ENCODE measurements at regions of chr6 and their contacts with region 1.

Region 1: DNA sequence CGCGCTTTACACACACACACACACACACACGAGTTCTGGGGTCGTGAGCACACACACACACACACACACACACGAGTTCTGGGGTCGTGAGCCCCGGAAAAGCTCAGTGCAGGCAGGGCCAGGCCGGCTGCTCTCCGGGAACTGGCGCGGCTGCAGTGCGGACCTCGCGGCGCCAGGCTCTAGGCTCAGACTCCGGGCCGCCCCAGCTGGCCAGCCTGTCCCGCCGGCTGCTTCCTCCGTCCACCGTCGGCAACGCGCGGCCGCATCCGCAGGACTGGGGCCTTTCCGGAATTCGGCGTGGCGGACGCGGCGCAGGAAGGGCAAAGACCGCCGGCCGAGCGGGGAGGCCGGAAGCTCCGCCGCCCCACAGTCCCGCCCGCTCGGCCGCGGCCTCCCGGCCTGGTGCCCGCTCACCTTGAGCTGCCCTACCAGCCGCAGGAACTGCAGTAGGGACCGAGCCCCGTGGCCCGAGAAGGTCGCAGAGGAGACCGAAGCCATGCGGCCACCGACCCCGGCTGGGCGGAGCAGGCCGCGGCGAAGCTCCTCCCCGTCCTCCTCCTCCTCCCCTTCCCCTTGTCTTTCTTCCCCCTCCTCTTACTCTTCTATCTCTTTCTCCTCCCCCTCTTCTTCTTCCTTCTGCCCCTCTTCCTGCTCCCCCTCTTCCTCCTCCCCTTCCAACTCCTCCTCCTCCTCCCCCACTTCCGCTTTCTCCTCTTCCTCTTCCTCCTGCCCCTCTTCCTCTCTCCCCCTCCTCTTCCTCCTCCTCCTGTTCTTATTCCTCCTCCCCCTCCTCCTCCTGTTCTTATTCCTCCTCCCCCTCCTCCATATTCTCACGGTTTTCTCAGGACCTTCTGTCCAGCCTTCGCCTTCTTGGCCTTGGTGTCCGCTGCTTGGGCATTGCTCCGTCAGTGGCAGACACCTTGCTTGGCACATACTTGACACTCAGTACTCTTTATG is at the start of gene HDDC2:
- DNase-seq: peak; percentile 50
- H3K4me3 Mint-ChIP-seq: peak within 1 kb of the TSS; percentile 97
- H3K27ac Mint-ChIP-seq: peak within 1 kb of the TSS; percentile 92
- H3K4me1 Mint-ChIP-seq: peaks cover 52% of the 10 kb centered on the region
- H3K27me3 Mint-ChIP-seq: peaks cover 13% of the 10 kb centered on the region
- total RNA-seq, gene HDDC2: 79.7 and 82.4 TPM in 2 replicates

Region 2: DNA sequence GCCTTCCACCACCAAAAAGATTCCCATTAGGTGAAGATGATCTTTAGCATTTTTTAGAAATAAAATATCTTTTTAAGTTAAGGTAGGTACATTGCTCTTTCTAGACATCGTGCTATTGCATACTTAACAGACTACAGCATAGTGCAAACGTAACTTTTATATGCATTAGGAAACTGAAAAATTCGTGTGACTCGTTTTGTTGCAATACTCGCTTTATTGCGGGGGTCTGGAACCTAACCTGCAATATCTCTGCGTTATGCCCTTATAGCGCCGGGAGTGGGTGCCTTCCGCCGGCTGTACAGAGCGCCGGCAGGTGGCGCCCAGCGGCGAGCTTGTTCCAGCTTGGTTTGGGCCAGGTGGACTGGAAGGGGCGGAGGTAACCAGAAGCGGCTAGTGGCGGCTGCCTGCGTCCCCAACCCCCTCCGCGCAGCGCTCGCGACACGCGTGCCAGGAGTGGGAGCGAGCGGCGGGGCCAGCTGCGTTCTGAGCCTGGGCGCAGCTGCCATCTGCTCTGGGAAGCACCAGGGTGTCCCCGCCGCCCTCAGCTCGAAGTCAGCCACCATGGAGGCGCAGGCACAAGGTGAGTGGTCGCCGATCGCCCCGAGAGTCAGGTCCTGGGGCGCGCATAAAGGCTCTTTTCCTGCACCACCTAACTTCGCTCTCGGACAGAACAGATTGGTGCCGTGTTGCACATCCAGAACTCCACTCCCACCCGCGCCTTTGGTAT is 148.2 kb before region 1 on chr6 and contains the start of gene TPD52L1:
- intact Hi-C with region 1: loop called (anchors 5 kb)
- DNase-seq: peak; percentile 31
- H3K4me3 Mint-ChIP-seq: peak within 1 kb of the TSS; percentile 74
- H3K27ac Mint-ChIP-seq: no peak within 1 kb of the TSS
- H3K4me1 Mint-ChIP-seq: no peaks in the 10 kb centered on the region
- H3K27me3 Mint-ChIP-seq: peaks cover 43% of the 10 kb centered on the region
- total RNA-seq, gene TPD52L1: 0.29 TPM in 1 of 2 replicates, not detected in the other

Region 3: DNA sequence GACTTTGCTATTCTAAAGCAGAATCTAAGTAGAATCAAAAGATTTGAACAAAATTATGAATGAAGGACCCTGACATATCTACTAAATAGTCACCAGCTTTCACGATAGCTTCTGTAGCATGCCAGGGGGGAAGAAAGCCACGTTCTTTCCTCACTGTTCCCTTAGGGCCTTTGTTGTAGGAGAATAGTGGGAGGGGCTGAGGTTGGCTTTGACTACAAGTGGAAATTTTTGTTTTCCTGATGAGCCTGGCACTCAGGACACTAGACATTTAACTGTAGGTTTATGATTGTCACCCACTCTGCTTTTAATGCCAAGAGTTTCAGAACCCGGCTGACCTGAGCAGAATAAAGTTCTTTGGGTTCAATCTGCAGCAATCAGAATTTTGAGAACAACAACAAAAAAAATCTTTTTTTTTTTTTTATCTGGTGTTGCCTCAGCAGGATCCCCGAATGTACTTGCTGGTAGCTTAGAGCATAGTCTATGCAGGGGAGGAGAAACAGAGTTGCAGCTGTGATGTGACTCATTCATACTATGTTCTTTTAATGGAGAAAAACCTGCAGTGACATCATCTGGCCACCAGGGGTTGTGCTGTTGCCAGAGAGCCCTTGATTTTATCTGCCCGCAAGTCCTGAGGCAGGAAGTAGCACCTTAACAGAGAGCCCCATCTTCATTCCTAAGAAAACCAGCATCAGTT is 109.7 kb before region 1 on chr6:
- intact Hi-C with region 1: loop called (anchors 5 kb)
- DNase-seq: peak; percentile 40
- H3K4me3 Mint-ChIP-seq: no peak overlapping the region
- H3K27ac Mint-ChIP-seq: no peak overlapping the region
- H3K4me1 Mint-ChIP-seq: peaks cover 8% of the 10 kb centered on the region
- H3K27me3 Mint-ChIP-seq: peaks cover 9% of the 10 kb centered on the region

Region 4: GRCh38 chr6:125314019-125314581 is 12.4 kb after region 1 on chr6:
- intact Hi-C with region 1: loop called (anchors 1 kb)
- DNase-seq: peak; percentile 17
- H3K4me3 Mint-ChIP-seq: no peak overlapping the region
- H3K27ac Mint-ChIP-seq: no peak overlapping the region
- H3K4me1 Mint-ChIP-seq: no peaks in the 10 kb centered on the region
- H3K27me3 Mint-ChIP-seq: peaks cover 6% of the 10 kb centered on the region

Region 5: DNA sequence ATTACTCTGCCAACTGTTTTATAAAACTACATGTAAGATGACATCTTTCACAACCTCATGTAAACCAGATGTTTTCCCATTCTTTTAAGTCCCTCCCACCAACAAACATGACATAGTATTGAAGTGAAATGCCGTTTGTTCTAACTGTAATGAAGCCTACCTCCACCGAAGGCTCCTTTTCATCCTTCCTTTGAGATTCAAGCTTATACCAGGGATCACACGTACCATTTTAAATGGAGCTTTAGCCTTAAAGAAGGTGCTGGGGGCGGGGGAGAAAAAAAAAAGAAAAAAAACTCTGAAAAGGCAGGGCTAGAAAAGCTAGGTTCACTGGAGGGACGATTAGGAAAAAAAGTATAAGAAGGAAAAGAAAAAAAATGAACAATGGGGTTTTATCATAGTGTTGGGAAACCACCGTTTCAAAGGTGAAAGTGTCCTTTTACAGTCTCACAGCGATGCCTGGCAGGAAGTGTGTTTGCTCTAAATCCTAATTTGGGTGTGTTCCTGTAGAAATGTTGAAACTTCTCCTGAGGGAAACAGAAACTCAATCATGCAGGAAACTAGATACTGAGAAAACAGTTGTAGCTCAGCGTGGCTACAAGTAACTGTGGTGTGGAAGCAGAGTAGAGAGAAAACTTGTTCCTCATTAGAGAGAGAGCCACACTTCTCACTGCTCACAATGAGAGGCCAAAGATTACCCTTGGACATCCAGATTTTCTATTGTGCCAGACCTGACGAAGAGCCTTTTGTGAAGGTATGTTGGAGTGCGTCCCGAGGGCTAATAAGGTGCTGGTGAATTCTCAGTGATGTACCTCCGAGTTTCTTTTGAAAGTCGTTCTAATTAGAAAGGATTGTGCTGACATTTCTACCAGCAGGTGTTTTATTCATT is 617.2 kb after region 1 on chr6:
- intact Hi-C with region 1: loop called (anchors 2 kb)
- DNase-seq: peak; percentile 66
- H3K4me3 Mint-ChIP-seq: peak overlapping the region; percentile 88
- H3K27ac Mint-ChIP-seq: peak overlapping the region; percentile 94
- H3K4me1 Mint-ChIP-seq: peaks cover 58% of the 10 kb centered on the region
- H3K27me3 Mint-ChIP-seq: no peaks in the 10 kb centered on the region

Region 6: GRCh38 chr6:125986300-125987025 is 684.8 kb after region 1 on chr6 and contains the start of gene TRMT11:
- intact Hi-C with region 1: loop called (anchors 5 kb)
- DNase-seq: peak; percentile 72
- H3K4me3 Mint-ChIP-seq: no peak within 1 kb of the TSS
- H3K27ac Mint-ChIP-seq: no peak within 1 kb of the TSS
- H3K4me1 Mint-ChIP-seq: peaks cover 8% of the 10 kb centered on the region
- H3K27me3 Mint-ChIP-seq: no peaks in the 10 kb centered on the region
- total RNA-seq, gene TRMT11: 27.9 and 29.1 TPM in 2 replicates

Region 7: GRCh38 chr6:126339796-126340609 is 1038.3 kb after region 1 on chr6 and contains the start of gene CENPW:
- intact Hi-C with region 1: loop called (anchors 1 kb)
- DNase-seq: peak; percentile 92
- H3K4me3 Mint-ChIP-seq: no peak within 1 kb of the TSS
- H3K27ac Mint-ChIP-seq: no peak within 1 kb of the TSS
- H3K4me1 Mint-ChIP-seq: peaks cover 27% of the 10 kb centered on the region
- H3K27me3 Mint-ChIP-seq: no peaks in the 10 kb centered on the region
- total RNA-seq, gene CENPW: 43.4 and 44.2 TPM in 2 replicates

Measured in activated T-helper 1 cell treated with anti-CD3 and anti-CD28 coated beads, Interleukin-12 subunit alpha, Interleukin-12 subunit beta, Interleukin-2, Interleukin-4 antibody, amounts not matched to agents 30 ng/mL and 10 ng/mL and 1 ng/mL, durations not matched to agents 14 hours and 24 hours and 36 hours (primary cell).